GM12878 (cell line): ENCODE measurements at regions of chr6 and their contacts with region 1.

Region 1: DNA sequence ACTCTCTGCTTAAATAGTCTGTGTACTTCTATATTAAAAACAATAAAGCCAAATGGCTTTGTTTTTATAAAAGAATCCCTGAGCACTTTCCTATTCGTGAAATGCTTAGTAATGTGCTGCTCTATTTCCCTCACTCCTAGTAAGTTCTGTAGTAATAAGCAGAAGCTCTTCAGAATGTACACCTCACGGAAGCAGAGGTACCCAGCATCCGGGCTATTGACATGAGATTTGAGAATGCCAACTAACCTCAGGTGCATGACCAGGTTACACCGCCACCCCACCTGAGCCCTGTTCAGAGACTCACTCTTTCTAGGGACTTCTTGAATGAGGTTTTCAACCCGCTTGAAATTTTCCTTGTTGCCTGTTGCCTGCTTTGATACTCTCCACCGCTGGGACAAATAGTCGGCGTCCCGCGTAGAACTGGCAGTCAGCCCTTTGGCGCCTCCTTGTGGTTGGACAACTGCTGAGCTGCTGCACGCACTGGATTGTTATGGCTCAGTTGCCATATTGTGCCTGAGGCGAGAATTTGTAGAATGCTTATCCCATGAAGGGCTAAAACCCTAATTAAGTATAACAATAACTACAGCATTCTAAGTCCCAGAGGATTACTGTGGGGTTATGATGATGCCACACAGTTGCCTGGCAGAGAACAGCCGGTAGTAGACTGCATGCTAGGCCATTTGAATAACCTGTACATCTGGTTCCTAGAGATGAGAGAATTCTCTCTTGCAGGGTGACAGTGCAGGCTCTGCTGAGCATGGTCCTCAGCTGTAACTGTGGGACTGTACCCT is 95.4 kb downstream of the KHDC1L start:
- DNase-seq: peak; percentile 39
- ATAC-seq: peak; percentile 99
- H3K4me3 ChIP-seq: no peak overlapping the region
- H3K27ac ChIP-seq: no peak overlapping the region
- H3K4me1 ChIP-seq: no peaks in the 10 kb centered on the region
- H3K27me3 ChIP-seq: no peaks in the 10 kb centered on the region
- CTCF ChIP-seq: peak; percentile 95 to 99 (median 96)
- EP300 ChIP-seq: no peak
- POLR2A ChIP-seq: no peak
- RAD21 ChIP-seq: peak; percentile 99

Region 2: GRCh38 chr6:72522719-72523141 is 607.1 kb before region 1 on chr6:
- CTCF ChIA-PET with region 1: interaction called, 4 read pairs
- POLR2A ChIA-PET with region 1: no interaction called
- RAD21 ChIA-PET with region 1: no interaction called
- SMC1A ChIA-PET with region 1: interaction called, 3 read pairs
- in situ Hi-C with region 1: no loop called
- intact Hi-C with region 1: loop called (anchors 2 kb)
- DNase-seq: no peak
- ATAC-seq: peak; percentile 86
- H3K4me3 ChIP-seq: no peak overlapping the region
- H3K27ac ChIP-seq: no peak overlapping the region
- H3K4me1 ChIP-seq: no peaks in the 10 kb centered on the region
- H3K27me3 ChIP-seq: no peaks in the 10 kb centered on the region; a peak in 1 of 4 replicates
- CTCF ChIP-seq: peak; percentile 32 to 55 (median 50)
- EP300 ChIP-seq: no peak
- POLR2A ChIP-seq: no peak
- RAD21 ChIP-seq: 0 out of 2 replicates have a peak, but pooled peaks have one; percentile 18

Region 3: DNA sequence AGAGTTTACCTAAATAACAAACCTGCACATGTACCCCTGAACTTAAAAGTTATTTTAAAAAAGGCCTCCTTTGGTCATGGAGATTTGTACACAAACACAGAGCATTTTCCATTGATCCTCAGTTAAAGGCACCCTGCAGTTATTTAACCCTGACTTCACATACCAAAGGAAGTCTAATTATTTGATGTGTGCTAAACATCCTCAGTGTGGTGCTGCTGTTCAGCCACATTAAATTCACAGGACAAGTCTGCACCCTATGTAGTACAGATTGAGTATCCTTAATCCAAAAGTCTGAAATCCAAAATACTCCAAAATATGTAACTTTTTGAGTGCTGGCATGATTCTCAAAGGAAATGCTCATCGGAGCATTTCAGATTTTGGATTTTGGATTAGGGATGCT is 486.6 kb before region 1 on chr6:
- CTCF ChIA-PET with region 1: interaction called, 22 read pairs
- POLR2A ChIA-PET with region 1: no interaction called
- RAD21 ChIA-PET with region 1: interaction called, 41 read pairs
- SMC1A ChIA-PET with region 1: interaction called, 38 read pairs
- in situ Hi-C with region 1: no loop called
- intact Hi-C with region 1: loop called (anchors 1 kb)
- DNase-seq: no peak
- ATAC-seq: peak; percentile 30; the same call in 1 of the 3 replicates
- H3K4me3 ChIP-seq: no peak overlapping the region
- H3K27ac ChIP-seq: no peak overlapping the region
- H3K4me1 ChIP-seq: peaks cover 4% of the 10 kb centered on the region; the same call in 1 of the 2 replicates
- H3K27me3 ChIP-seq: no peaks in the 10 kb centered on the region
- CTCF ChIP-seq: peak in 2 of 3 experiments; percentile 13 to 50; a peak in 3 of 6 replicates
- EP300 ChIP-seq: no peak
- POLR2A ChIP-seq: no peak
- RAD21 ChIP-seq: peak; percentile 57

Region 4: GRCh38 chr6:72894091-72894490 is 235.8 kb before region 1 on chr6:
- CTCF ChIA-PET with region 1: no interaction called
- POLR2A ChIA-PET with region 1: no interaction called
- RAD21 ChIA-PET with region 1: no interaction called
- SMC1A ChIA-PET with region 1: no interaction called
- in situ Hi-C with region 1: no loop called
- intact Hi-C with region 1: no loop called
- DNase-seq: no peak
- ATAC-seq: no peak
- H3K4me3 ChIP-seq: no peak overlapping the region
- H3K27ac ChIP-seq: no peak overlapping the region
- H3K4me1 ChIP-seq: no peaks in the 10 kb centered on the region
- H3K27me3 ChIP-seq: no peaks in the 10 kb centered on the region
- CTCF ChIP-seq: no peak
- EP300 ChIP-seq: no peak
- POLR2A ChIP-seq: no peak
- RAD21 ChIP-seq: no peak

Region 5: DNA sequence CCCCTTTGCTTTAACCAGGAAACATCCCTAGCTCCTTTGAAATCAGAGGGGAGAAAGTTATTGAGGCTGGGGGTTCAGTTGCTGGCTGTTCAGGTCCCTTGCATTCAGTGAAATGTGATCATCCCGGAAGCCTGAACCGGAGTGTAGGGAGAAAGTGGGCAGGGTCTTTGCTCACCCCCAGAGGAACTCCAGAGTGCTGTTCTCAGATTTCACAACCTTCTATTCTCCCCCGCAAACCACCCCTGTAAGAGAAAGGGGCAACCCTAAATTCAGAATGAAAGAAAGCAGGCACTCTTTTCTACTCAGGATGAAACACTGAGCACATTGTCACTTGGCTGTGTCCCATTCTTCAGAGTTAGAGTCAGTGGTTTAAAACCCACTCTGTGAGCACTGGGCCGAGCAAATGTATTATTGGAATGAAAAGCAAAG is 44.4 kb before region 1 on chr6:
- CTCF ChIA-PET with region 1: interaction called, 12 read pairs
- POLR2A ChIA-PET with region 1: no interaction called
- RAD21 ChIA-PET with region 1: interaction called, 3 read pairs
- SMC1A ChIA-PET with region 1: interaction called, 12 read pairs
- in situ Hi-C with region 1: no loop called
- intact Hi-C with region 1: no loop called
- DNase-seq: peak; percentile 36
- ATAC-seq: peak; percentile 80
- H3K4me3 ChIP-seq: no peak overlapping the region
- H3K27ac ChIP-seq: no peak overlapping the region
- H3K4me1 ChIP-seq: peaks cover 6% of the 10 kb centered on the region
- H3K27me3 ChIP-seq: no peaks in the 10 kb centered on the region
- CTCF ChIP-seq: no peak
- EP300 ChIP-seq: 0 out of 4 replicates have a peak, but pooled peaks of 1 of the 2 experiments have one; percentile 31
- POLR2A ChIP-seq: no peak
- RAD21 ChIP-seq: no peak

Region 6: GRCh38 chr6:73145690-73146089 is 15.8 kb after region 1 on chr6:
- CTCF ChIA-PET with region 1: interaction called, 15 read pairs
- POLR2A ChIA-PET with region 1: no interaction called
- RAD21 ChIA-PET with region 1: interaction called, 4 read pairs
- SMC1A ChIA-PET with region 1: interaction called, 4 read pairs
- in situ Hi-C with region 1: no loop called
- intact Hi-C with region 1: no loop called
- DNase-seq: no peak
- ATAC-seq: peak; percentile 59
- H3K4me3 ChIP-seq: no peak overlapping the region
- H3K27ac ChIP-seq: no peak overlapping the region
- H3K4me1 ChIP-seq: peaks cover 9% of the 10 kb centered on the region
- H3K27me3 ChIP-seq: no peaks in the 10 kb centered on the region
- CTCF ChIP-seq: no peak
- EP300 ChIP-seq: no peak
- POLR2A ChIP-seq: no peak
- RAD21 ChIP-seq: no peak